ENCODE measurements at regions of chr1 and their contacts with region 1.

Region 1: DNA sequence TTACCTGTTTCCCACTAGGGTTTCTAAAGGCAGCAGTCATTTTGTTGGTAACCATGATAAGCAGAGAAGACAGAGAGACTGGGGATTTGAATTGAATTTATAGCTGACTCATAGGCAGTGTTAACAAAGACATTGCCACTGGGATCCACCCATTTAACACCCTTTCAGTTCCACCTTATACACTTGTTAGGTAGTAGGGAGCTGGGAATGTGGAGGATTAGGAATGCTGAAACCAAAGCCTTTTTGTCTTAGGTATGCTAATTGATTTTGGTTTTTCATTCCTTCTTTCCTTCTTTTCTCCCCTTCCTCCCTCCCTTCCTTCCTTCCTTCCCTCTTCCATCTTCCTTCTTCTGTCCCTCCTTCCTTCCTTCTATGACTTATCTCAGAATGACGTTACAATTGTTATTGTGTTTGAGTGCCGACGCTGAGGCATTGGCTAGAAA is 7.5 kb upstream of the EVI5 start:
- DNase-seq: peak; percentile 21 to 72 (median 44)
- ATAC-seq: peak; percentile 88
- H3K4me3 ChIP-seq: no peak overlapping the region
- H3K27ac ChIP-seq: peak overlapping the region; percentile 71
- H3K4me1 ChIP-seq: peaks cover 8 to 17% of the 10 kb centered on the region in 2 experiments; a peak in 3 of 5 replicates
- H3K27me3 ChIP-seq: no peaks in the 10 kb centered on the region
- CTCF ChIP-seq: no peak
- EP300 ChIP-seq: no peak
- POLR2A ChIP-seq: 0 out of 2 replicates have a peak, but pooled peaks have one; percentile 42
- RAD21 ChIP-seq: no peak

Region 2: DNA sequence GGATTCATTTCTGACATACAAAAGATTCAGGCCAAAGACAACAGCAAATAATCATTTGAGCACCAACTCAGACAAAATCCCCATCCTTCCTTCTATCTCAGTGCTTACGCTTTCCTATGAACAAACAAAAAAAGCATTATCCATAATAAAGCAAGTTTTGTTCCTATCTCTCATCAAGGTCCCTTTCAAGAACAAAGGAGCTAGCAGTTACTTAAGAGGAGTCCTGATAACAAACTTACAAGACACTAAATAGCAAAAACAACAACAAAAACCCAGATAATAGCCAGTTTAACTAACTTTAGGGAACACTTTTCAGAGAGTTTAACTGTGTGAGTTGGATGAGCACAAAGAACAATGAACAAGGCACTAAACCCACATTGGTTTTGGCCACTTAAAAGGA is 18.0 kb before region 1 on chr1:
- CTCF ChIA-PET with region 1: no interaction called
- POLR2A ChIA-PET with region 1: interaction called, 12 read pairs
- in situ Hi-C with region 1: no loop called
- intact Hi-C with region 1: no loop called
- DNase-seq: no peak
- ATAC-seq: no peak
- H3K4me3 ChIP-seq: no peak overlapping the region
- H3K27ac ChIP-seq: no peak overlapping the region
- H3K4me1 ChIP-seq: peaks cover 0 to 6% of the 10 kb centered on the region in 2 experiments; a peak in 1 of 5 replicates
- H3K27me3 ChIP-seq: no peaks in the 10 kb centered on the region
- CTCF ChIP-seq: no peak
- EP300 ChIP-seq: no peak
- POLR2A ChIP-seq: no peak
- RAD21 ChIP-seq: no peak

Region 3: DNA sequence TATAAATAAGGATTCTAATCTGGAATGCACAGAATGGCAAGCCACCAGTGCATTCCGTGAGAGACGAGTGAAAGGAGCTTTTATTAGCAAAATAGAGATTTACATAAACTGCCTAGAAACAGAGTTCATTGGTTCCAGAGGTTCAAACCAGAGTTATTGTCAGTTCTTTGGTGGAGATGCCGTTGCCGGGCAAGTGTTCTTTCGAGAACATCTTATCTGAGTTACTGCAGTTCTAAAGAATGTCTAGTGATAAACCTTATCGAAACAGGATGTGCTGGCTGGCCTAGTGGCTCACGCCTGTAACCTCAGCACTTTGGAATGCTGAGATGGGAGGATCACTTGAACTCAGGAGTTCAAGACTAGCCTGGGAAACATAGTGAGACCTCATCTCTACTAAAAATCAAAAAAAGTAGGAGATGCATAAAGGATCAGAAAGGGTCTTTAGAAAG is 12.4 kb after region 1 on chr1:
- CTCF ChIA-PET with region 1: no interaction called
- POLR2A ChIA-PET with region 1: interaction called, 15 read pairs
- in situ Hi-C with region 1: no loop called
- intact Hi-C with region 1: no loop called
- DNase-seq: peak; percentile 61 to 92 (median 76)
- ATAC-seq: peak; percentile 99
- H3K4me3 ChIP-seq: no peak overlapping the region
- H3K27ac ChIP-seq: peak overlapping the region; percentile 40; the same call in 1 of the 3 replicates
- H3K4me1 ChIP-seq: peaks cover 0 to 9% of the 10 kb centered on the region in 2 experiments; a peak in 3 of 5 replicates
- H3K27me3 ChIP-seq: no peaks in the 10 kb centered on the region
- CTCF ChIP-seq: no peak
- EP300 ChIP-seq: peak; percentile 92
- POLR2A ChIP-seq: no peak
- RAD21 ChIP-seq: no peak

Region 4: DNA sequence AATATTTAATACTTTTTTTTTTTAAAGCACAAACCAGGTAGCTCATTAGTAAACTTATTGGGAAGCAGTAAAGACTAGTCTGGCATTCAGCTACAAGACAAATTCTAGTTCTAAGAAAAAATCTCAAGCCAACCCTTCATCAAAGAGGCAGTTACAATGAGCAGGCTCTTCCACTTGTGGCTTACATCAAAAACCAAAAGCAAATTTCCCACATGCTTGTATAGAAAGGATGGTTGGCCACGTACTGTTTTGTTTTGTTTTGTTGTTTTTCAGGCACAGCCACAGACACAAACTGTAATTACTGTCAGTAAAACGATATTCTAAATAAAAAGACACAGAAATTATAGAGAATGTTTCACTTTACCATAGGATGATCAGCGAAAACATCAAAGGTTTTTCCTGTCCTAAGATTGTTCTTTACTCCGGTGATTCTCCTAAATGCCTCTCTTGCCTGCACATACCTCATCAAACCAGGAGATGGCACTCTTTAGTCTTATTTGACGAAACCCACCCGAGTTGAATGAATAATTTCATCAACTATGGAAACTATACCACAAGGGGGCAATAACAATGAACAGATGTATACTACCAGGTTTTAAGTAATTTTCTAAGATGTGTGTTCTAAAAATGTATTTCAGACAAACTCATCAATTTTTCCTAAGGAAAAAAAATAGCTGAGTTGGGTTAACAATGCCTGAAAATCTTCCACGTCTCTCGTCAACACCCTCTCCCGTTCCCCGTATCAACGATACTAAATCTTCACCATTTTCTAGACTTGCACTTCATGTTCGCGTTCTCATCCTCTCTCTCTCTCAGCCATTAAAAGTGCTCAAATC is 66.4 kb after region 1 on chr1:
- CTCF ChIA-PET with region 1: no interaction called
- POLR2A ChIA-PET with region 1: no interaction called
- in situ Hi-C with region 1: no loop called
- intact Hi-C with region 1: no loop called
- DNase-seq: peak; percentile 72 to 83 (median 75)
- ATAC-seq: peak; percentile 85
- H3K4me3 ChIP-seq: no peak overlapping the region
- H3K27ac ChIP-seq: no peak overlapping the region
- H3K4me1 ChIP-seq: peaks cover 0 to 7% of the 10 kb centered on the region in 2 experiments; a peak in 1 of 5 replicates
- H3K27me3 ChIP-seq: no peaks in the 10 kb centered on the region
- CTCF ChIP-seq: peak; percentile 93 to 99 (median 98)
- EP300 ChIP-seq: no peak
- POLR2A ChIP-seq: no peak
- RAD21 ChIP-seq: peak; percentile 100